PC-9 (cell line): ENCODE measurements at regions of chr6 and their contacts with region 1.

Region 1: GRCh38 chr6:37624121-37624985 is 73.3 kb downstream of the MDGA1 start:
- DNase-seq: peak; percentile 81 to 95
- H3K4me3 ChIP-seq: peak overlapping the region; percentile 38; the same call in 1 of the 2 replicates
- H3K27ac ChIP-seq: no peak overlapping the region
- H3K4me1 ChIP-seq: peaks cover 45% of the 10 kb centered on the region
- H3K27me3 ChIP-seq: no peaks in the 10 kb centered on the region
- CTCF ChIP-seq: no peak

Region 2: DNA sequence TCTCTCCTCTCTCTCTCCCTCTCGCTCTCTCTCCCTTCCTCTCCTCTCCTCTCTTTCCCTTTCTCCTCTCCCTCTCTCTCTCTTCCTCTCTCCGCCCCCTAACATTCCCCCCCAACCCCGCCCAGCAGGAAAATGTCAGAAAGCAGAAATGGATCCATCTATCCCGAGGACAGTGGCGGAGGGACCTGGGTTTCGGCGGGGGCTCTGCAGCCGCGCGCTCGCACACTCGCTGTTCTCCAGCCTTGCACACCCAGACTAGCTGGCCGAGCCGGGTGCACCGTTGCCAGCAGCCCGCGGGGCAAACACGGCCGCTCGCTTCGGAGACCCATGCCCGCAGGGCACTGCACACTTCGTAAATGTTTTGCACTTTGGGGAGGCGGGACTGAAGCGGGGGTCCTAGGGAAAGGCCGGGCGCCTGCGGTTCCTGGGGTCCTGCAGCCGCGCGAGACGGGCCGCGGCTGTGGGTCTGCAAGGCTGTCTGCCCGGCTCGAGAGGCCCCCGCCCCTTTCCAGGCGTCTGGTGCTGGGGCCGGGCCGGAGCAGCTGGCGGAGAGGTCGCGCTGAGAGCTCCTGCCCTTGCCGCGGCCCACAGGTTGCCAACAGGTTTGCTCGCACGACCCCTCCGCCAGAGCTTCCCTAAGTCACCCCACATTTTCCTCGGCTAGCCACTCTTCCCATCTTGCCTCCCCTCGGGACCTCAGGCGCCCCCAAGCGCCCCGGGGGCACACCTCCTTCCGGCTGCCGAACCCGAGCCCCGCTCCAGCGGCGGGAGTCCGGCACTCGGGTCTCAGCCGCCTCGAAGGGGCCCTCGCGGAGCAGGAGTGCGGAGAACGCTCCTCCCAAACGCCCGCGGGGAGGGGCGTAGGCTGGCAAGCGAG is 74.1 kb after region 1 on chr6:
- CTCF ChIA-PET with region 1: no interaction called
- POLR2A ChIA-PET with region 1: interaction called, 11 read pairs
- intact Hi-C with region 1: no loop called
- DNase-seq: peak; percentile 51 to 83
- H3K4me3 ChIP-seq: peak overlapping the region; percentile 77
- H3K27ac ChIP-seq: no peak overlapping the region
- H3K4me1 ChIP-seq: no peaks in the 10 kb centered on the region; the same call in 1 of the 2 replicates
- H3K27me3 ChIP-seq: peaks cover 42% of the 10 kb centered on the region
- CTCF ChIP-seq: peak; percentile 62; the same call in 1 of the 2 replicates